Transverse colon (tissue), 4 donors: ENCODE measurements at regions of chr7 and their contacts with region 1.

Region 1: DNA sequence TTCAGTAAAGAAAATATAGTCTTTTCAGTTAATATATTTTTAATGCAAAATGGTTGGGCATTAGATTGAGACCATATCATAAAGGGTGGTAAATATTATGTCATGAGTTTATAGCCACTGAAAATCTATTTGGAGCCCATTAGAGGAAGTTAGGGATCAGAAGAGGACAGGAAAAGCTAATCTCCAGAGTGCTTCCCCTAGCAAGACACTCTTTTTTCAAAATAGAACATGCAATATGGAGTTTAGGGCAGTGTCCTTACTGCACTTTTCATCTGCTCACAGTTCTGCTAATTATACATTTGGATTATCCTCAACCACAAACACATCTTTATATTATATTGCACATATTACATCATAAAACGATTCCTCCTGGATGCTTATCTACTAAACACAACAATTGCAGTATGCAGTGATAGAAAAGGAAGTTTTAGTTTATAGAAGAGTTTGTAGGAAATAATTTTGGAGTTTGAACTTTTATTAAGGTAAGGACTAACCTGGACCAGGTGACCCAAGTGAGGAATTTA is 159.8 kb downstream of the PHF14 start:
- DNase-seq: no peak
- H3K4me3 ChIP-seq: no peak overlapping the region
- H3K27ac ChIP-seq: no peak overlapping the region
- H3K4me1 ChIP-seq: peaks cover 0 to 13% (median 2%) of the 10 kb centered on the region in 4 donors
- H3K27me3 ChIP-seq: no peaks in the 10 kb centered on the region
- CTCF ChIP-seq: no peak
- EP300 ChIP-seq: no peak
- POLR2A ChIP-seq: no peak

Region 2: DNA sequence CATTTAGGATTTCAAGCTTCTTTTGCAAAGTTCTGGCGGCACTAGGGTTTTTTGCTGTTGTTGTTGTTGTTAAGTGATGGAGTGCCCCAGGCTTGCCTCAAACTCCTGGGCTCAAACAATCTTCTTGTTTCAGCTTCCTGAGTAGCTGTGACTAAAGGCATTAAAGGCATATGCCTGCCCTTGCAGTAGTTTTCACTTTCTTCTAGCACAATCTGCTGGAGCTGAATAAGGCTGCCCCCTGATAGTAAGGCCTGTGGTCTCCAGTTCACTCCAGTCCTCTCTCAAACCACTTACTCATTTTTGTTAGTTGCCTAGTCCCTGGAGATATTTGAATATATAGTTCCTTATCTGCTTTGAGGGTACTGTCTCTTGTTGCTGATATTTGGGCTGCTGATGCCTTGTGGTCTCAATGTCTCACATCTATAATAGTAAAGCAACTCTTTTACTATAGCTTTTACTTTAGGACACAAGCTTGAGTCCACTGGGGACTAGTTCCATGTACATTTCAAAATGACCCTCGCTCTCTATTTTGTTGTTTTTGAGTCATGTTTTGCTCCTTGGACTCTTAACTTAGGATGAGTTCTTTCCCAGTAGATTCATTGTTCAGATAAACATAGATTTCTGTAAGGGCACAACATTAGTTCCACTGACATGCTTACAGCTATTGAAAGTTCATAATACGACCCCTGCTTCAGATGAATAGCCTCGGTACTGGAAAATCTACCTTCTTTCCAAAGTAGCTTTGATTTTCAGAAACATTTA is 134.3 kb before region 1 on chr7:
- in situ Hi-C with region 1: no loop called
- intact Hi-C with region 1: no loop called
- DNase-seq: no peak
- H3K4me3 ChIP-seq: no peak overlapping the region
- H3K27ac ChIP-seq: no peak overlapping the region
- H3K4me1 ChIP-seq: peaks cover 0 to 10% (median 5%) of the 10 kb centered on the region in 4 donors
- H3K27me3 ChIP-seq: no peaks in the 10 kb centered on the region
- CTCF ChIP-seq: no peak
- EP300 ChIP-seq: no peak
- POLR2A ChIP-seq: no peak

Region 3: DNA sequence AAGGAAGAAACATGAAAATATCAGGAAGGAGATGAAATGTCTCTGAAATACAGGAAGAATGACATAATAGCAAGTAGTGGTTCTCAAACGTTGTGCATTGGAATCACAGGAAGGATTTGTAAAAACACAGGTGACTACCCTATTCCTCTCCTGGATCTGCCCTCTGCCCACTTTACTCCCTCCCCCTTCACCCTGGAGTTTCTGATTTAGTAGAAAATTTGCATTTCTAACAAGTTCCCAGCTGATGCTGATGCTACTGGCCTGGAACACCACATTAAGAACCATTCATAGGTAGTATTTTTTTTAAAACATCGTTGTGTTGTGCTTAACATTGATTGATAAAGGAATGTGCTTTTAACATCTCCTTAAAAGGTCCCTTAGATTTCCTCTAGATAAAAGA is 28.9 kb before region 1 on chr7:
- in situ Hi-C with region 1: no loop called
- intact Hi-C with region 1: loop called (anchors 2 kb)
- DNase-seq: no peak
- H3K4me3 ChIP-seq: no peak overlapping the region
- H3K27ac ChIP-seq: no peak overlapping the region
- H3K4me1 ChIP-seq: no peaks in the 10 kb centered on the region
- H3K27me3 ChIP-seq: no peaks in the 10 kb centered on the region
- CTCF ChIP-seq: no peak
- EP300 ChIP-seq: no peak
- POLR2A ChIP-seq: no peak

Region 4: DNA sequence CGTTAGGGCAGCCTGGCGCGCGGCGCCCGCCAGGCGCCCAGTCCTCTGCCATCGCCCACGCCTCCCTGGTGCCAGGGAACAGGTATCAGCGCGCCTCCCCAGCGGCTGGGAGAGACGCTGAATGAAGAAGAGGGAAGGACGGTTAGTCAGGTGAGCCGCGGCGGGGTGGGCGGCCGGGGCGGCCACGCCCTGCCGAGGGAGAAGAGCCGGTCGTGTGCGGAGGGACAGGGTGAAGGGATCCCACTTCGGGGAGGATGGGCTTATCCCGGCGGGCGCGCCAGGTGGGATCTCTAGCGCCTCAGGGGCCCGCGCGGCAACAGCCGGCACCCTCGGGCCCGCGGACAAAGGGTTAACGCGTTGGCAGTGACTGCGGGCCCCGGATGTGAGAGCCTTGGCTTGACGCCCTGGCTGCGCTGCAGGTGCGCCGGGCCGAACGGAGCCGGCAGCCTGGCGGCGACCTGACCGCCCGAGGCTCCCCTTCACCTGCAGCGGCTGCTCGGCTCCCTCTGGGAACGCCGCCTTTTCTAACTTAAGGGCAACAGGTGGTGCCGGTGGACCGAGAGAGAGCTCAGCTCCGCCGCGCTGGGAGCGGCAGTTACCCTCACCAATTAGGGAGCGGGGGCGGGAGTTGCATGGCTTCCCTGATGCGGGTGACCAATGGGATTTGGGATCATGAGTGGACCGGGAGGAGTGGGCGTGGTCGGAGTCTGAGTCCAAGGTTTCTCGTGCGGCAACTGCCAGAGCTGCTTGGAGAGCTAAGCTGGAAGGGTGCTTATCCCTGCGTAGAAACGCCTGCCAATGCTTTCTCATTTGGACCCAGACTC is 1553.6 kb after region 1 on chr7 and contains the start of gene ARL4A:
- in situ Hi-C with region 1: no loop called
- intact Hi-C with region 1: no loop called
- DNase-seq: peak; percentile 99
- H3K4me3 ChIP-seq: peak within 1 kb of the TSS; percentile 72 to 93 (median 90)
- H3K27ac ChIP-seq: peak within 1 kb of the TSS; percentile 95 to 99 (median 96)
- H3K4me1 ChIP-seq: peaks cover 0 to 28% (median 10%) of the 10 kb centered on the region in 4 donors
- H3K27me3 ChIP-seq: no peaks in the 10 kb centered on the region
- CTCF ChIP-seq: peak in 4 of 5 experiments; percentile 14 to 37 (median 28)
- EP300 ChIP-seq: no peak
- POLR2A ChIP-seq: peak; percentile 99
- total RNA-seq, gene ARL4A: 10.5 to 135 (median 74.9) TPM